Body of pancreas (tissue), 4 donors: ENCODE measurements at regions of chr10 and their contacts with region 1.

Region 1: GRCh38 chr10:27794157-27794556 is 48.5 kb upstream of the MKX start:
- DNase-seq: peak in 1 of 4 donors; percentile 4
- ATAC-seq: no peak
- H3K4me3 ChIP-seq: no peak overlapping the region
- H3K27ac ChIP-seq: no peak overlapping the region
- H3K4me1 ChIP-seq: no peaks in the 10 kb centered on the region
- H3K27me3 ChIP-seq: no peaks in the 10 kb centered on the region
- CTCF ChIP-seq: no peak
- POLR2A ChIP-seq: no peak

Region 2: DNA sequence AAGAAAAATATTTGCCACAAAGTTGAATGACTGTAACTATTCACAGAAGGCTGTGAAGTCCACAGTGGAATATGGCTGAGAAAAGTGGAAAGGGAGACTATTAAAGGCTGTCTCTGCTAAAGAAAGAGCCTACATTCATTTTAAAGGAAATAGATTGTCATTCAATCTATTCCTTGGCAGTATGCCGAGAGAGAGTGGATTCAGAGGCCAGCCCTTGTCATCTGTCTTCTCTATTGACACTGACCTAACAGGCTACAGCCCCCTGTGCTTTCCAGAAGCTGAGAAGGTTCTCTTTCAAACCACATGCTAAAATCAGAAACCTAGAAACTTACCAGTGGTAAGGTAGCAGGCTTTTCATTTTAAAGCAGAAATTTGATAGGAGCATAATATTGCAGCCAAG is 192.7 kb after region 1 on chr10:
- intact Hi-C with region 1: loop called (anchors 10 kb)
- DNase-seq: no peak
- ATAC-seq: no peak
- H3K4me3 ChIP-seq: no peak overlapping the region
- H3K27ac ChIP-seq: no peak overlapping the region
- H3K4me1 ChIP-seq: no peaks in the 10 kb centered on the region
- H3K27me3 ChIP-seq: no peaks in the 10 kb centered on the region
- CTCF ChIP-seq: no peak
- POLR2A ChIP-seq: no peak